ENCODE measurements at regions of chr5 and their contacts with region 1.

Region 1: DNA sequence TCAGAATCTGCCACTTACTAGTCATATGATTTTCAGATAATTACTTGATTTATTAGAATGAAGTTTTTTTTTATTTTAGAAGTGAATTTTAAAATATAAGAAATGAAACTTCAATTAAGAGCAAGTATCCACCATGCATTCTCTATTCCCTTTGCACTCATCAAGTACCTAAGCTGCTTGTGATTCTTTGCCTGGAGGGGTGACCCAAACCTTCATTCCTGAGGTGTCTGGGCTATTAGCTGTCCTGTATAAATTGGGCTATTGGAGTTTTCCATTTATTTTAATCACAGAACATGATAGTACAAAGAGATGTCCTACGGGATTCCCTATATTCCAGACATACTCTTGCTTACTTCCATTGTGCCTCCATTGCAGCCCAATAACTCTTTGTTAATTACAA is 942.1 kb downstream of the TAF11L14 start:
- DNase-seq: no peak
- H3K4me3 ChIP-seq: no peak overlapping the region
- H3K27ac ChIP-seq: no peak overlapping the region
- H3K4me1 ChIP-seq: no peaks in the 10 kb centered on the region
- H3K27me3 ChIP-seq: no peaks in the 10 kb centered on the region
- CTCF ChIP-seq: no peak
- EP300 ChIP-seq: no peak
- POLR2A ChIP-seq: no peak

Region 2: GRCh38 chr5:18329328-18329727 is 247.0 kb before region 1 on chr5:
- in situ Hi-C with region 1: no loop called
- intact Hi-C with region 1: no loop called
- DNase-seq: no peak
- H3K4me3 ChIP-seq: no peak overlapping the region
- H3K27ac ChIP-seq: no peak overlapping the region
- H3K4me1 ChIP-seq: no peaks in the 10 kb centered on the region
- H3K27me3 ChIP-seq: no peaks in the 10 kb centered on the region
- CTCF ChIP-seq: no peak
- EP300 ChIP-seq: no peak
- POLR2A ChIP-seq: no peak

Region 3: DNA sequence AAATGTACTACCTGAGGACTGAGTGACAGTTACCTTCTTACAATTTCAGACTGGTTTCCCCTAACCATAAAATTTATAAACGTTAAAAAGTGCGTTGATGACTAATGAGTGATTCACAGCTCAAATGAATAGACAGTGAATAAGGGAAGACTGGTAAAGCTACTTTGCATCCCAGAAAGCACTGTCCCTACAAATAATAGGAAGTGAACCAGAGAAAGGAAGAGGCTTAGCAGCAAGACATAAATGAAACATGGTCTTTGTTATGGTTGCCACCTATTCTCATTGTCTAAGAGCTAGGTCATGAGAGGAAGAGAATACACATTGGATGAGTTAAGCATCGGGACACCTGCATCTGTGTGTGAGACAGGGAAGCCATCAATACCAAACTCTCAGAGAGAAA is 92.9 kb before region 1 on chr5:
- in situ Hi-C with region 1: no loop called
- intact Hi-C with region 1: no loop called
- DNase-seq: no peak
- H3K4me3 ChIP-seq: no peak overlapping the region
- H3K27ac ChIP-seq: no peak overlapping the region
- H3K4me1 ChIP-seq: no peaks in the 10 kb centered on the region
- H3K27me3 ChIP-seq: no peaks in the 10 kb centered on the region
- CTCF ChIP-seq: no peak
- EP300 ChIP-seq: no peak
- POLR2A ChIP-seq: no peak

Region 4: DNA sequence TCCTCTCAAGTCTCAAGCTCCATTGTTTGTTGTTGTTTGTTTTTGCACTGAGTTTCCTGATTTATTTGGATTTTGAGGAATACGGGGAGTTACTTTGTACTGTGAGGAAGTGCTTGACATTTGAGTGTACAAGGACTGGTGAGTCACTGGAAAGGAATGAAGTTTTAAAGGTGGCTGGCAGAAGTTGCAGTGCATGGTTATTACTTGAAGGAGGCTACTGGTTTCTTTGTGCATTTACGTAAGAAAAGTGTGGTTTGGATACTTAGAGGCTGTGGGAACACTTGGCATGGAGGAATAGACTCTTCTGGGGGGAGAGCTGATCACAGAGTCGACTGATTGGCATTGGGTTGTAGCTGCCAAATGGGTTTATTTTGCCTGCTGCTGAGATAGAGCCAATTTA is 23.1 kb before region 1 on chr5:
- in situ Hi-C with region 1: no loop called
- intact Hi-C with region 1: loop called (anchors 1 kb)
- DNase-seq: no peak
- H3K4me3 ChIP-seq: no peak overlapping the region
- H3K27ac ChIP-seq: no peak overlapping the region
- H3K4me1 ChIP-seq: no peaks in the 10 kb centered on the region
- H3K27me3 ChIP-seq: no peaks in the 10 kb centered on the region
- CTCF ChIP-seq: no peak
- EP300 ChIP-seq: no peak
- POLR2A ChIP-seq: no peak